H1 (cell line): ENCODE measurements at regions of chr13 and their contacts with region 1.

Region 1: GRCh38 chr13:91722267-91722884 is 324.0 kb downstream of the GPC5 start:
- DNase-seq: no peak
- H3K4me3 ChIP-seq: no peak overlapping the region
- H3K27ac ChIP-seq: no peak overlapping the region
- H3K4me1 ChIP-seq: no peaks in the 10 kb centered on the region
- H3K27me3 ChIP-seq: no peaks in the 10 kb centered on the region
- CTCF ChIP-seq: peak in 2 of 3 experiments; percentile 37 to 38; a peak in 2 of 4 replicates
- EP300 ChIP-seq: no peak
- POLR2A ChIP-seq: no peak
- RAD21 ChIP-seq: peak; percentile 28 to 38; a peak in 3 of 4 replicates

Region 2: DNA sequence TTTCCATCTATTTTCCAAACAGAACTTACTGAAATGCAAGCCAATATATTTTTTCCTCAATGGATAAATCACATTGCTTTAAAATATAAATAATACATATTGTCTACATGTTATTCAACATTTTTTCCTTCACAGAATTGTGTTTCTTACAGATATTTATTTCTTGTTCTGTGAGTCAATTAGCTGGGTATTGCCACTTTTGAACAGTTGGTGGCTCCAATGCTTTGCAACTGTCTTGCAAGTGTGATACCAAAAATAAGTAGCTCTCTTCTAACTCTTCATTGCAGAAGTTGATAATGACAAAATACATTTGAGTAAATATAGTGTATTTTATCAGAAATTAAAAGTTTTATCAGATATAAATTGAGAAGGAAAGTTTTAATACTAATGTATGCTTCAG is 341.0 kb before region 1 on chr13:
- CTCF ChIA-PET with region 1: interaction called, 10 read pairs
- POLR2A ChIA-PET with region 1: no interaction called
- DNase-seq: no peak
- H3K4me3 ChIP-seq: no peak overlapping the region
- H3K27ac ChIP-seq: no peak overlapping the region
- H3K4me1 ChIP-seq: no peaks in the 10 kb centered on the region
- H3K27me3 ChIP-seq: no peaks in the 10 kb centered on the region
- CTCF ChIP-seq: peak in 2 of 3 experiments; percentile 33 to 39; a peak in 2 of 4 replicates
- EP300 ChIP-seq: no peak
- POLR2A ChIP-seq: no peak
- RAD21 ChIP-seq: peak; percentile 65 to 66